ENCODE measurements at regions of chr7 and their contacts with region 1.

Region 1: DNA sequence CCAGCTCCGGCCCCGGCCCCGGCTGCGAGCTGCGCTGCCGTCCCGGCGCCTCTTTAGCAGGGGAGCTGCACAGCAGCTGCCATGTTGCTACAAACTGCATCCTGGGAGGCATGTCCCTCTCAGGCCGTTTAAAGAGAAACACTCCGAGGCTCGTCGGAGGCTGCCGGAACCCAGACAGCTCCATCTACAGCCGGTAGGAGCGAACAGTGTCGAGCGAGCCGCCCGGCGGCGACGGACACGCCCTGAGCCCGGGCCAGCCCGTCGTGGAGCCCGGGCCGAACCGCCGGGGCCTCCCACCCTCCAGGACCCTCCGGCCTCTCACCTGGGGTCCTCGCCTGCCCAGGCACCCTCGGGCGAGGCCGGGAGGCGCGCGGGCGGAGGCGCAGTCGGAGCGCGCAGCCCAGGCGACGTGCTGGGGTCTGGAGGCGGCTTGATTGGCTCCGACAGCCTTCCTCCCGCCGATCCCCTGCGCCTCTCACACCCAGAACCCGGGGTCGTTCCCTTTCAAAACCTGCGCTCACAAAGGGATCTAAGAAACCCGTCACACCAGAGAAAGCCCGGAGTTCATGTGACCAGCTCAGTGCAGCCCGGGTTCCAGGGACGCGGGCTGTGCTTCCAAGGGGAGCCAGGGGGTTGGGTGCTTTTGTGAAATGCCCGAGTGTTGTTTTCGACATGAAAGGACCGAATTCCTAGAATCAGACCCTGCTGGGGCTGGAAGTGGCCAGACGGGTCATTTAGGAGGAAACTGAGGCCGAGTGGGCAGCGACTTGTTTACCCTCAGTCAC is at the start of gene ZNF777:
- DNase-seq: peak; percentile 87
- H3K4me3 Mint-ChIP-seq: peak within 1 kb of the TSS; percentile 78
- H3K27ac Mint-ChIP-seq: peak within 1 kb of the TSS; percentile 57
- H3K4me1 Mint-ChIP-seq: peaks cover 18% of the 10 kb centered on the region
- H3K27me3 Mint-ChIP-seq: peaks cover 21% of the 10 kb centered on the region
- total RNA-seq, gene ZNF777: 11.7 to 11.8 TPM

Region 2: GRCh38 chr7:149422129-149422913 is 38.4 kb before region 1 on chr7:
- CTCF ChIA-PET with region 1: interaction called, 20 read pairs
- POLR2A ChIA-PET with region 1: interaction called, 7 read pairs
- DNase-seq: peak; percentile 77
- H3K4me3 Mint-ChIP-seq: peak overlapping the region; percentile 69
- H3K27ac Mint-ChIP-seq: peak overlapping the region; percentile 35
- H3K4me1 Mint-ChIP-seq: peaks cover 7% of the 10 kb centered on the region
- H3K27me3 Mint-ChIP-seq: peaks cover 3% of the 10 kb centered on the region

Region 3: GRCh38 chr7:149440222-149440621 is 20.5 kb before region 1 on chr7:
- CTCF ChIA-PET with region 1: interaction called, 22 read pairs
- POLR2A ChIA-PET with region 1: interaction called, 5 read pairs
- DNase-seq: no peak
- H3K4me3 Mint-ChIP-seq: no peak overlapping the region
- H3K27ac Mint-ChIP-seq: peak overlapping the region; percentile 19
- H3K4me1 Mint-ChIP-seq: peaks cover 18% of the 10 kb centered on the region
- H3K27me3 Mint-ChIP-seq: no peaks in the 10 kb centered on the region

Region 4: GRCh38 chr7:149496642-149497391 is 36.1 kb after region 1 on chr7:
- CTCF ChIA-PET with region 1: interaction called, 10 read pairs
- POLR2A ChIA-PET with region 1: interaction called, 8 read pairs
- DNase-seq: peak; percentile 53
- H3K4me3 Mint-ChIP-seq: peak overlapping the region; percentile 97
- H3K27ac Mint-ChIP-seq: peak overlapping the region; percentile 90
- H3K4me1 Mint-ChIP-seq: peaks cover 44% of the 10 kb centered on the region
- H3K27me3 Mint-ChIP-seq: peaks cover 4% of the 10 kb centered on the region

Region 5: GRCh38 chr7:149624419-149625339 is 164.0 kb after region 1 on chr7:
- CTCF ChIA-PET with region 1: interaction called, 10 read pairs
- POLR2A ChIA-PET with region 1: interaction called, 4 read pairs
- DNase-seq: peak; percentile 94
- H3K4me3 Mint-ChIP-seq: peak overlapping the region; percentile 95
- H3K27ac Mint-ChIP-seq: peak overlapping the region; percentile 72
- H3K4me1 Mint-ChIP-seq: peaks cover 41% of the 10 kb centered on the region
- H3K27me3 Mint-ChIP-seq: peaks cover 24% of the 10 kb centered on the region

Measured in activated CD4-positive, alpha-beta memory T cell treated with anti-CD3 and anti-CD28 coated beads, Interleukin-2, amount 10 ng/mL, durations not matched to agents 7 days and 5 days (primary cell).